ENCODE measurements at regions of chr9 and their contacts with region 1.

Region 1: DNA sequence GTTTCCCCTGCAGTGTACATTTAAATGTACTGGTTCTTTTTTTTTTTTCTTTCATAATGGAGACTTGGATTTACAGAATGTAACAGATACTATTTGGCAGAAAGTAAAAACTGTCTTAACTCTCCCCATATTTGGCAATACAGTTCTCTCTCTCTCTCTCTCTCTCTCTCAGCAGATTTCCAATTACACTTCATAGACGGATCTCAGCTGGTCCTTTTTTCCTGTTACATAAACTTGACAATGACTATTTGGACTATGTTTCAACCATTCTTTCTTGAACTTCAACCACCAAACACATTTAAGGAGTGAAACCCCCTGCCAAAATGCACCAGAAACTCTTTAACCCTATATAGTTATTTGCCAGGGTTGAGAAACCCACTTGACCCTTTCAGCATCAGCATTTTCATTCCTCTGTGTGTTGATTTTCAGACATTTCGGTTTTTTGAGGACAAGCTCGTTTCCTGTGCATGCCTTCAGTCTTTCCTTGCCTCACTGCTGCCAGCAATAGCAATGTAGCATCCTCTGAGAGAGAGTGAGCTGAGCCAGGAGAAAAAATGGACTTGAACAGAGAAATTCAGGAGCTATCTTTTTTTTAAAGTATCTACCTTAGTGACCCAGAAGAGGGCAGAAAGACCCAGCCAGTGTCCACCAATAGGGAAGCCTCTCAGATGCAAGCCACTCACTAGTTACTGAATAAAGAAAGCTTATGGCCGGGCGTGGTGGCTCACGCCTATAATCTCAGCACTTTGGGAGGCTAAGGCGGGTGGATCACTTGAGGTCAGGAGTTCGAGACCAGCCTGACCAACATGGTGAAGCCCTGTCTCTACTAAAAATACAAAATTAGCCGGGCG is 26.0 kb upstream of the GNA14 start:
- DNase-seq: no peak
- H3K4me3 ChIP-seq: no peak overlapping the region
- H3K27ac ChIP-seq: peak overlapping the region in 1 of 2 donors; percentile 21
- H3K4me1 ChIP-seq: no peaks in the 10 kb centered on the region
- H3K27me3 ChIP-seq: no peaks in the 10 kb centered on the region
- CTCF ChIP-seq: no peak
- POLR2A ChIP-seq: no peak

Region 2: DNA sequence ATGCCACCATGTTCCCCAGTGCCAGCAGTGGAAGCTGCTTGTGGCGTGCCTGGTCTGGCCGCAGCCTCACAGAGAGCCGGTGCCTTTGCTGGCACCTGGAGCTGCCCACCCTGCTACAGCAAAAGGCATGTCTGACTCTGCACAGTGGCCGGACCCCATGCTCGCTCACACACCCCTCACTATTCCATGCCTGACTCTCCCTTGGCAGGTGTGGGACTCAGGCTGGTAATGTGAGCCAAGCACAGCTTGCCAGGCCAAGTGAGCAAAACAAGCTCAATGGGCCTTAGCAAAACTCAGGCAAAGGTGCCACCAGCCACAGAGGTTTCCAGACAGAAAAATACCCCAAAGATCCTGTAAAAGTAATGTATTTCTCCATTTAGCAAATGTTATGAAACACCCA is 41.5 kb before region 1 on chr9:
- intact Hi-C with region 1: no loop called
- DNase-seq: no peak
- H3K4me3 ChIP-seq: no peak overlapping the region
- H3K27ac ChIP-seq: no peak overlapping the region
- H3K4me1 ChIP-seq: no peaks in the 10 kb centered on the region
- H3K27me3 ChIP-seq: no peaks in the 10 kb centered on the region
- CTCF ChIP-seq: no peak
- POLR2A ChIP-seq: no peak

Region 3: GRCh38 chr9:77707383-77708063 is 33.4 kb after region 1 on chr9:
- intact Hi-C with region 1: loop called (anchors 5 kb)
- DNase-seq: no peak
- H3K4me3 ChIP-seq: no peak overlapping the region
- H3K27ac ChIP-seq: no peak overlapping the region
- H3K4me1 ChIP-seq: no peaks in the 10 kb centered on the region
- H3K27me3 ChIP-seq: no peaks in the 10 kb centered on the region
- CTCF ChIP-seq: no peak
- POLR2A ChIP-seq: no peak